Body of pancreas (tissue), 4 donors: ENCODE measurements at regions of chr17 and their contacts with region 1.

Region 1: DNA sequence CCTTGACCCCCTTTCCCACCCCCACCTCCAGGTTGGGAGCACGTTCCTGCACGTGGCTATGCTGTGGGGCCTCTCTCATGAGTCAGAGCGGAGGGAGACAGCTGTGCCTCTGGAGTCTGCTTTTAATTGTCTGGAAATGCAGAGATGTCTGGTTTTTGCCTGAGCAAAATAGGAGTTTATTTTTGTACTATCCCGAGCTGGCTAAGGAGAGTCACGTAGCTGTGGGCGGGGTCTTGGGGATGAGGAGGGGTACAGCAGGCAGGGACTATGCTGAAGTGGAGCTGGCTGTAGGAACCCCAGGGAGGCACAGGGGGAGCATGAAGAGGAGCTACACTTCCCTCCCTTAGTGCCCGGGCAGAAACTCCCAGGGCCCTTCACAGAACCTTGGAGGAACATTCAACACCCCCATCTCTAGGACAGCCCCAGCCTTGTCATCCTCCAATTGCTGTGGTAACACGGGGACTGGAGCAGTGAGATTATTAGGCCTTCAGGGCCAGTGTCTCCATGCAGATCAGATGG is 44.7 kb upstream of the LGALS9 start:
- DNase-seq: no peak
- ATAC-seq: no peak
- H3K4me3 ChIP-seq: no peak overlapping the region
- H3K27ac ChIP-seq: no peak overlapping the region
- H3K4me1 ChIP-seq: peaks cover 3% of the 10 kb centered on the region
- H3K27me3 ChIP-seq: no peaks in the 10 kb centered on the region
- CTCF ChIP-seq: no peak
- POLR2A ChIP-seq: no peak

Region 2: GRCh38 chr17:27423651-27424050 is 162.6 kb before region 1 on chr17:
- intact Hi-C with region 1: no loop called
- DNase-seq: no peak
- ATAC-seq: no peak
- H3K4me3 ChIP-seq: no peak overlapping the region
- H3K27ac ChIP-seq: no peak overlapping the region
- H3K4me1 ChIP-seq: no peaks in the 10 kb centered on the region
- H3K27me3 ChIP-seq: no peaks in the 10 kb centered on the region
- CTCF ChIP-seq: no peak
- POLR2A ChIP-seq: no peak

Region 3: DNA sequence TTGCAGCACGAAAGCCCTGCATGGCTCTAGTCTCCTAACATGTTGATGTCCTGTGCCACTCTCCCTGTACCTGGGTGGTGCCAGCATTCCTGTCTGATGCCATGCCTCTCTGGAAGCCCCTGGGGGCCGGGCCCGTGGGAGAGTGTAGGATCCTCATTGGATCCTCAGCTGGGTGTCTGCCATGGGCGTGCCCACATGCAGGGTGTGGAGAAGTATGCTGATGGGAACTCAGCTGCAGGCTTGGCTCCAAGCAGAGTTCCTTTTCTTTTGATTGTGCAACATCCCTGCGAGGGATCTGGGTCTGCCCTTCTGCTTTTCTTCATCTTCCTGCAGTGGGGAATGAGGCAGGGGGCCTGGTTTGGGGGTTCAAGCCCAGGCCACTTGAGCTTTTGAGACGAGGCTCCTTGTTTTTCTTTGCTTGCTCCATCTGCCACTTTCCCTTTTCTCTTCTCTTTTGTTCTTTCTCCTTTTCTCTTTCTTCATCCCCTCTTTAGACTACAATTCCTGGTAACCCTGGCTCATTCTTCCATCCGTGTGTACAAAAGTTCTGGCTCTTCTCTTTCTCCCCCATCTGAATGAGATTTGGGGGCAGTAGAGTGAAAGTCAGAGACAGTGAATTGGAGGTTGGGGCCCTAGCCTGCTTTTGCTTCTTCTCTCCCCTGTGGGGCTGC is 97.1 kb before region 1 on chr17:
- intact Hi-C with region 1: loop called (anchors 10 kb)
- DNase-seq: peak in 2 of 4 donors; percentile 56 to 65
- ATAC-seq: peak; percentile 22
- H3K4me3 ChIP-seq: no peak overlapping the region
- H3K27ac ChIP-seq: peak overlapping the region in 1 of 4 donors; percentile 15
- H3K4me1 ChIP-seq: peaks cover 49% of the 10 kb centered on the region
- H3K27me3 ChIP-seq: no peaks in the 10 kb centered on the region
- CTCF ChIP-seq: no peak
- POLR2A ChIP-seq: no peak

Region 4: GRCh38 chr17:27526604-27527230 is 59.5 kb before region 1 on chr17:
- intact Hi-C with region 1: no loop called
- DNase-seq: peak; percentile 63 to 77 (median 73)
- ATAC-seq: peak; percentile 50
- H3K4me3 ChIP-seq: no peak overlapping the region
- H3K27ac ChIP-seq: peak overlapping the region; percentile 40 to 84 (median 72)
- H3K4me1 ChIP-seq: peaks cover 92% of the 10 kb centered on the region
- H3K27me3 ChIP-seq: no peaks in the 10 kb centered on the region
- CTCF ChIP-seq: no peak
- POLR2A ChIP-seq: no peak

Region 5: DNA sequence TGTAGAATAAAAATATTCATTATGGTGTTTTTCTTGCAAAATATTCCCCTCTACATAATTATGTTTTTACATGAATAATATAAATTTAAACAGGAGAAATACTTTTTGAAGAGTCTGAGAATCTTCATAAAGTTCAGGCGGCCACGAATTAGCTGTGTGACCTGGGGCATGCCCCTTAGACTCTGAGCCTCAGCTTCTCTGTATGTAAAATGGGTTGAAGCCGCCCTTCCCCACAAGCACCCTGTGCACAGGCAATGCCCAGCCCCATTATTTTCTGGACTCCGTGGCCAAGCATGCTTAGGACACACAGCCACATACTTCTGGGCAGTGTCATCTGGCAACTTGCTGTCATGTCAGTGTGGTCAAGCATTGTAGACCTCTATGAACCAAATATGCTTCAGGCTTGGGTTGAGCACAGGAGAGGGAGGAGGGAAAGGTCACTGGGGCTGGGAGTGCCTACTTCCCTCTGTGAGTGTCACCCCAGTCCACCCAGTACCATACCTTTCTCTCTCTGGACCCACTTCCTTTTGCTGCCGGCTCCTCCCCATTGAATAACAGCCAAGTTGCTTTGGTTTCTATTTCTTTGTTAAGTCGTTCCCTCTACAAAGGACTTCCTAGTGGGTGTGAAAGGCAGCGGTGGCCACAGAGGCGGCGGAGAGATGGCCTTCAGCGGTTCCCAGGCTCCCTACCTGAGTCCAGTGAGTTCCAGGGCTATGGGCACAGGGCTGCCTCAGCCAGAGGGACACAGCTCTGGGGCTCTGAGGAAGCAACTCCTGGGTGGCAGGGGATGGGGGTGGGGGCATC is 44.5 kb after region 1 on chr17 and contains the start of gene LGALS9:
- intact Hi-C with region 1: no loop called
- DNase-seq: peak; percentile 34 to 69 (median 44)
- ATAC-seq: peak; percentile 53
- H3K4me3 ChIP-seq: no peak within 1 kb of the TSS
- H3K27ac ChIP-seq: peak within 1 kb of the TSS in 3 of 4 donors; percentile 46 to 63 (median 49)
- H3K4me1 ChIP-seq: peaks cover 37% of the 10 kb centered on the region
- H3K27me3 ChIP-seq: no peaks in the 10 kb centered on the region
- CTCF ChIP-seq: no peak
- POLR2A ChIP-seq: peak in 2 of 3 donors; percentile 50 to 59
- total RNA-seq, gene LGALS9: 6.3 to 21.3 TPM